Head of caudate nucleus (tissue), 42 donors: ENCODE measurements at regions of chr12 and their contacts with region 1.

Region 1: DNA sequence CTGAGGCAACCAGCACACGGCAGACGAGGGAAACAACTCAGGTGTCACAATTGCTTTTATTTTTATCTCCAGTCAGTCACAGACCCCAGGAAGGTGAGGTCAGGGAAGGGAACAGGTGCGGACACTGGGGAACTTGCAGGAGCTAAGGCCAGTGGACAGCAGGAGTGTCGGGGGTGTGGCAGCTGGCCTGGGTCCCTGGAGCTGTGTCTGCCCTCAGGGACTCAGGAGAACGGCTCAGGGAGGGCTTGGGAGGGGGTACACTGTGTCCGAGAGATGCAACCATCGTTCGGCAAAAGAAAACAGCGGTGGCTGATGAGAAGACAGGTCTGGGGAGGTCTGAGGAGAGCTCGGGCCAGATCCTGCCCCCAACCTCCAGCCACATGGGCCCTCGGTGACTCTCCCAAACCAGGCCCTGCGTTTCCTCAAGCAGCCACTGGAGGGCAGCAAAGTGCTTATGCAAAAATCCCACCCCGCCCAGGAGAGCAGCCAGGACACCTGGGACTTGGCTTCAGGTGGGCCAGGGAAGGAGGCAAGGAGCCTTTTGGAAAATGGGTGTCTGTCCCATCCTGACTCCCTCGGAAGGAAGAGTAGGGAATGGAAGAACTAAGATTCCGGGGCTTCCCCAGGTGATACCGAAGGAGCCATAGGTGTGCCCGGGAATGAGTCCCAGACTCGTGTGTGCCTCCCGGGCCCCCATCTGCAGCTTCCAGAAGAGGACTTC is 24.1 kb upstream of the BCDIN3D start:
- DNase-seq: peak; percentile 61 to 90 (median 80)

Region 2: GRCh38 chr12:50066433-50066832 is 199.4 kb after region 1 on chr12:
- intact Hi-C with region 1: loop called (anchors 10 kb)
- DNase-seq: no peak

Region 3: DNA sequence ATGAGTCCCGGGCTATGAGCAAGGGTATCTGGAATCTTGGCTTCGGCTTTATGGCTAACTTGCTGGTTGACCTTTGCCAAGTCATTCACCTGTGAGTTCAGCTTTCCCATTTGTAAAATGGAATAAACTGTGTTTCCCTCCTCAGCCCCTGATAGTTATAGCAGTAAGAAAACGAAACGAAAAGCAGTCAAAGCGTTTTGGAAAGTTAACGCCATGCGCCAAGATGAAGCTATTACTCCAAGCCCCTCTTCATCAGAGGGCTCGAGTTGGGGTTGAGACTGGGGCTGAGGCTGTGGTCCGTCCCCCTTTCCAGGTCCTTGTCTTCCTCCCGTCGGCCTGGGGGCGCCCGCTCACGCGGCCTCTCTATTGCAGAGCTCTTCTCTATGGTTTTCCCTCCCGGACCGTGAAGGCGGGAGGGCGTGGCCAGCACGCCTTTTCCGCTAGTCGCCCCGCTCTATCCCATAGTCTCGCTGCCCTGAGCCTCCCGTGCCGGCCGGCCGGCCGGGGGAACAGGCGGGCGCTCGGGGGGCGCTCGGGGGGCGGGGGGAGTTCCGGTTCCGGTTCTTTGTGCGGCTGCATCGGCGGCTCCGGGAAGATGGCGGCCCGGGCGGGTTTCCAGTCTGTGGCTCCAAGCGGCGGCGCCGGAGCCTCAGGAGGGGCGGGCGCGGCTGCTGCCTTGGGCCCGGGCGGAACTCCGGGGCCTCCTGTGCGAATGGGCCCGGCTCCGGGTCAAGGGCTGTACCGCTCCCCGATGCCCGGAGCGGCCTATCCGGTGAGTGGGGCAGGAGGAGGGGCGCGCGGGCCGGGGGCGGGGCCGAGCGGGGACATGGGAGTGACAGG is 218.0 kb after region 1 on chr12 and contains the start of gene SMARCD1:
- intact Hi-C with region 1: no loop called
- DNase-seq: peak; percentile 87 to 98 (median 96)